Ovary (tissue), 10 donors: ENCODE measurements at regions of chr5 and their contacts with region 1.

Region 1: DNA sequence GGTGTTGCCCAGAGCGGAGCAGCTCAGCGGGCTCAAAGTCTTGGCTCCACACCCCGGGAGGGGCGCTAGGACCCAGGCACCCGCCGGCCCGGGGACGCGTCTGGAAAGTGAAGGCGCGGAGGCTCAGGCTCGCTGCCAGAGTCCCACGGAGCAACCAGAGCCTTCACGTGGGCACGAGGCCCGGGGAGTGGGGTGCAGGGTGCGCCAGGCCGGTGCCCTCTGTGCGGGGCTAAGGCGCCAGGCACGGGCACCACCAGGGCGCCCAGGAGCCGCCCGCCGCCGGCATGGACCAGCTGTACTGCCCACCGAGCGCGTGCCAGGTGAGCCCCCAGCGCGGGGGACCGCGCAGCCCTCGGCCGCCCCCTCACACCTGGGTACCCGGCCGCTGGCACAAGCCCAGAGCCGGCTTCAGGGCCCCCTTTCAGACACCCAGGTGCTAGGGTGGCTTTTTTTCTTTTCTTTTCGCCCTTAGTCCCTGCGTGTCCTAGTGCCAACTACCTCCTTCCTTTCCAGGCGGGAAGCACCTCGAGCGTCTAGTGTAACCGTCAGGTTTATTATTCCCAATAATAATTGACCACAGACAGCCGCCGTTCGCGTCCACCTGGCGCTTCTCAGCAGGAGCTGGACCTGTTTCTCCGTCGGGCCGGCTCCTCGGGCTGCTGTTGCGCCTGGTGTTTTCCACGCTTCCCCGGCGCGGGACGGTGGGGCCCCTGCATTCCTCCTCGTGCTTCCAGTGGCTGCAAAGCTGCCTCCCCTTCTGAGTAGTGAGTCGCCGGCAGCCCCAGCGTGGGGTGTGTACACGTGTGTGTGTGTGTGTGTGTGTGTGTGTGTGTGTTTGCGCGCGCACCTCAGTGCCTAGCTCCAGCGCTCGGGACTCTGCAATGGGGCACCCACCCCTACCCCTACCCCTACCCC is 30.1 kb upstream of the PDE8B start:
- DNase-seq: peak in 2 of 5 donors; percentile 22 to 54
- H3K4me3 ChIP-seq: peak overlapping the region; percentile 46
- H3K27ac ChIP-seq: no peak overlapping the region
- H3K4me1 ChIP-seq: peaks cover 6% of the 10 kb centered on the region
- H3K27me3 ChIP-seq: no peaks in the 10 kb centered on the region
- CTCF ChIP-seq: no peak
- EP300 ChIP-seq: no peak
- POLR2A ChIP-seq: no peak

Region 2: DNA sequence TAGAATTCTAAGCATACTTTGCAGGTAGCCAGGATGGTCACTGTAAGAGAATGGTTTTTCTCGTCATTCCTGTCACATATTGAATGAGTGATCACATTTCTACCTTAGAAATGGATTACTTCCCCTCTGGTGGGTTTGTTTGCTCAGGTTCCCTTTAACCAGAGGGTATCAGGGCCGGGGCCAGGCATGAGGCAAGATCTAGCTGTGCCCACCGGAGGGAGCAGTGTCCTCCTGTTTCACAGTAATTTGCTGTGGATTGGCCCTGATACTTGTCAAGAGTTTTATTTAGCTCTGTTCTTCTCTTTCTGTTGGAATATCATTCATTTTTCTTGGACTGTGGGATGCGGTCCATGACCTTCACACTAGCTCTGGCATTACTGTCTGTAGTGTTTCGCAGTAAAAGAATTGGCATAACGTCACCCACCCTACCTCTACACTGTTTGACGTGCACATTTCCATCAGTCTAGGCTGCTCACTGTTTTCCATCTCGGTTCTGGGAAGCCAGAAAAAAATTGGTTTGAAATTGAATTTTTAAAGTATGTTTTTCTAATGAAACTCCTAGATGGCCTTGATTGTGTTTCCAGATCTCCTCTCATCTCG is 50.9 kb before region 1 on chr5:
- intact Hi-C with region 1: no loop called
- DNase-seq: peak in 3 of 5 donors; percentile 17 to 44 (median 25)
- H3K4me3 ChIP-seq: no peak overlapping the region
- H3K27ac ChIP-seq: no peak overlapping the region
- H3K4me1 ChIP-seq: no peaks in the 10 kb centered on the region
- H3K27me3 ChIP-seq: no peaks in the 10 kb centered on the region
- CTCF ChIP-seq: no peak
- EP300 ChIP-seq: no peak
- POLR2A ChIP-seq: no peak

Region 3: GRCh38 chr5:77202145-77202544 is 21.7 kb after region 1 on chr5:
- intact Hi-C with region 1: loop called in 1 of 4 experiments (anchors 2 kb)
- DNase-seq: no peak
- H3K4me3 ChIP-seq: no peak overlapping the region
- H3K27ac ChIP-seq: no peak overlapping the region
- H3K4me1 ChIP-seq: no peaks in the 10 kb centered on the region
- H3K27me3 ChIP-seq: no peaks in the 10 kb centered on the region
- CTCF ChIP-seq: no peak
- EP300 ChIP-seq: no peak
- POLR2A ChIP-seq: no peak